ENCODE measurements at regions of chr15 and their contacts with region 1.

Region 1: DNA sequence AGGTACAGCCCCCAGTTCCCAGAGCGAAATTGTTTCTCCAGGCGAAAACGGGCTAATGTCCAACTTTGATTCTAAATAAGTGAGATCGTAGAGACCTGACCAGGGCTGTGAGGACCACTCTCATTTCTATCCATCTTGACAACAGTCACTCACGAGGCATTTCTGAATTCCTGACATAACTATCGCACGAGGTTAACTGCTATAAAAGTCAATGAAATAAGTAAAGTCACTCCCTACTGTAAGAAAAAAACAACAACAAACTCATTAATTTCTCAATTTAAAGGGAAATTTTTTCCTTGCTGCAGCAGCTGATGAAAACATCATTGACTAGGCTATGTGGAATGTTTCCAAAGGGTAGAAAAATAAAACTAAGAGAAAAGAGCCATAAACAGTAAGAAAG is 69.1 kb downstream of the GREM1 start:
- DNase-seq: no peak
- H3K4me3 ChIP-seq: no peak overlapping the region
- H3K27ac ChIP-seq: no peak overlapping the region
- H3K4me1 ChIP-seq: no peaks in the 10 kb centered on the region
- H3K27me3 ChIP-seq: no peaks in the 10 kb centered on the region
- CTCF ChIP-seq: no peak

Region 2: DNA sequence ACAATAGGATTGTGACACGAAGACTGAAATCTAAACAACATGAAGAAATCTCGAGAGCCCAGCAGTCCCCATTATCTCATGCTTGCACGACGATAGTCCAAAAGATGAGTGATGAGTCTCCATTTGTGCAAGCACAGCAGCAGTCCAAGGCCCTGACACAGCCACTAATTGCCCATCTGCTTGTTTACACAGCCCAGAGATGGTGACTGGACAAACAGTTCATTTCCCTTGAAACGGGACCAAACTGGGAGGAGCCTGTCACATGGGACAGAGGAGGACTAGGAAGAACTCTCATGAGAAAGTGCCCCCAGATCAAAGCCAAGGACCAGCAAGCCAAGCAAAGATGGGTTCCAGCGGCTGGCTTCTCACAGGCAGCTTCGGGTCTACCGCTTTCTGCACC is 51.9 kb after region 1 on chr15:
- intact Hi-C with region 1: loop called (anchors 5 kb)
- DNase-seq: no peak
- H3K4me3 ChIP-seq: no peak overlapping the region
- H3K27ac ChIP-seq: no peak overlapping the region
- H3K4me1 ChIP-seq: no peaks in the 10 kb centered on the region
- H3K27me3 ChIP-seq: no peaks in the 10 kb centered on the region
- CTCF ChIP-seq: no peak